Naive thymus-derived CD8-positive, alpha-beta T cell (primary cell): ENCODE measurements at regions of chr12 and their contacts with region 1.

Region 1: DNA sequence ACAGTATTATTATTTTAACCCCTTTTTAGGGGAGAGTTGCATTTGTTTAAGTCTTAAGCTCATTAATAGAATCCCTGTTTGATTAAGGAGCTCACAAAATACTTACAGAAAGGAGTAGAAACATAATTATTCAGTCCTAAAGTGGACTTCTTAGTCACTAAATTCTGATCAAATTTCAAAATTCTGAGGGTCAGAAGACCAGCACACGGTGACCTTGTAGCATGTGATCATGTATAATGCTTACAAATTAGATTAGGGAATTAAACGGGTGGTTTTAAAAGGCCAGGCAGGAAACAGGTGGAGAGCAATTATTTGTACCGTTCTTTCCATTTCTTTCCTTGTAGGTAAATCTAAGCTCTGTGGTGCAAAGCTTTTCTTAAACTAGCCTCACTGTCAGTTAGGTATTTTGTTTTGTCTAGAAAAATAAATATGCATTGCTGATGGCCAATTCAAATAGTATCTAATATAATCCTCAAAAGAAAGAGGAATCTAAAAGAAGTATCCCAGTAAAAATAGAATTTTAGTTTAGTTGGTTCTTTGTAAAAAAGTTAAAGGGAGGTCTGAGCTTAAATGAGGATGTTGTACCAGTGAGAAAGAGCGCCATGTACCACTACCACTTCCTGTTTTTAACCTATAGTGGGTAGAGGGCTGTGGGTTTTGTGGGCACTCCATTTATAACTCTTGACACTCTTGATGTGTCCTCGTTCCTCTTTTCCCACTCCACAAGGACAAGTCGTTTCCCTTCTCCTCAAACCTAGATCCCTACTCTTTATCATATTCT is 51.1 kb downstream of the SLC38A1 start:
- DNase-seq: peak; percentile 17 to 92 (median 70)
- ATAC-seq: peak; percentile 39 to 44
- H3K4me3 Mint-ChIP-seq: peak overlapping the region; percentile 69 to 87 (median 82)
- H3K27ac Mint-ChIP-seq: peak overlapping the region; percentile 96 to 100 (median 98)
- H3K4me1 Mint-ChIP-seq: peaks cover 55 to 100% (median 93%) of the 10 kb centered on the region in 4 donors
- H3K27me3 Mint-ChIP-seq: no peaks in the 10 kb centered on the region

Region 2: GRCh38 chr12:46167412-46167811 is 50.3 kb before region 1 on chr12:
- POLR2A ChIA-PET with region 1: no interaction called
- DNase-seq: no peak
- ATAC-seq: peak; percentile 44 to 54
- H3K4me3 Mint-ChIP-seq: no peak overlapping the region
- H3K27ac Mint-ChIP-seq: no peak overlapping the region
- H3K4me1 Mint-ChIP-seq: peaks cover 4 to 6% (median 5%) of the 10 kb centered on the region in 4 donors
- H3K27me3 Mint-ChIP-seq: no peaks in the 10 kb centered on the region

Region 3: DNA sequence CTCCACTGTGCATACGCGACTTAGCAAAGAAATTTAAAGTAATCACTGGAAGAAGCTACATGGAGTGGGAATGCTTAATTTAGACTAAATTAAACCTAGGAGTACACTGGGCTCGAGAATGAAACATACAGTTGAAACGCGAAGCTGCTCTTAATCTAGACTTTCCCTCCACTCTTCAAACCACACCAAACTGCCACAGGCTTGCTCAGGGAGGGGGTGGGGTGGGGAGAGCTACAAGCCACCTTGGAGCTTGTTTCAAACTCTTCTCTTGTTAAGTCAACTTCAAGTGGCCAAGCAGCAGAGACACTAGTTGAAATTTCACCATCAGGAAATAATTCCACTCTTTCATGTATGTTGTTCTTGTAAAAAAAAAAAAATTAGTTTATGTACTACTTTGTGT is 18.8 kb before region 1 on chr12:
- POLR2A ChIA-PET with region 1: interaction called, 19 read pairs
- DNase-seq: no peak
- ATAC-seq: peak; percentile 39 to 51
- H3K4me3 Mint-ChIP-seq: peak overlapping the region in 3 of 10 donors; percentile 15 to 39 (median 28)
- H3K27ac Mint-ChIP-seq: peak overlapping the region; percentile 0 to 86 (median 79)
- H3K4me1 Mint-ChIP-seq: peaks cover 11 to 39% (median 25%) of the 10 kb centered on the region in 4 donors
- H3K27me3 Mint-ChIP-seq: no peaks in the 10 kb centered on the region

Region 4: DNA sequence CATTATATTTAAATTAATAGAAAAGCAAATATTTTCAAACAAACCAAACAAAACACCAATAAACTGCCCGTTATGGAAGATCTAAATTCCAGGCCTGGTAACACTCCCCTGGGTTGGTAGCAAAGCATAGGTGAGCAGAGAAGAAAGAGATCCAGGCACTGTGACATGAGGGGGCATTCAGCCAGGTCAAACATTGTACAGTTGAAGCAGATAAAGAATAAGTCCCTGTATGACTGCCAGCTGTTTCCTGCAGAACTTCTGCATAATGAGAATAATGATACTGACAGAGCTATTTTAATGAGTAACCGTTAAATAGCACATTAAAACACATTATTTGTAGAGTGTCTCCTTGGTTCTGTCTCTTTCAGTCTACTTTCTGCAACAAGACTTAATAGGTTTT is 15.7 kb after region 1 on chr12:
- POLR2A ChIA-PET with region 1: interaction called, 16 read pairs
- DNase-seq: no peak
- ATAC-seq: no peak
- H3K4me3 Mint-ChIP-seq: peak overlapping the region in 5 of 10 donors; percentile 25 to 51 (median 36)
- H3K27ac Mint-ChIP-seq: peak overlapping the region in 9 of 10 donors; percentile 44 to 88 (median 79)
- H3K4me1 Mint-ChIP-seq: peaks cover 30 to 89% (median 80%) of the 10 kb centered on the region in 4 donors
- H3K27me3 Mint-ChIP-seq: no peaks in the 10 kb centered on the region

Region 5: DNA sequence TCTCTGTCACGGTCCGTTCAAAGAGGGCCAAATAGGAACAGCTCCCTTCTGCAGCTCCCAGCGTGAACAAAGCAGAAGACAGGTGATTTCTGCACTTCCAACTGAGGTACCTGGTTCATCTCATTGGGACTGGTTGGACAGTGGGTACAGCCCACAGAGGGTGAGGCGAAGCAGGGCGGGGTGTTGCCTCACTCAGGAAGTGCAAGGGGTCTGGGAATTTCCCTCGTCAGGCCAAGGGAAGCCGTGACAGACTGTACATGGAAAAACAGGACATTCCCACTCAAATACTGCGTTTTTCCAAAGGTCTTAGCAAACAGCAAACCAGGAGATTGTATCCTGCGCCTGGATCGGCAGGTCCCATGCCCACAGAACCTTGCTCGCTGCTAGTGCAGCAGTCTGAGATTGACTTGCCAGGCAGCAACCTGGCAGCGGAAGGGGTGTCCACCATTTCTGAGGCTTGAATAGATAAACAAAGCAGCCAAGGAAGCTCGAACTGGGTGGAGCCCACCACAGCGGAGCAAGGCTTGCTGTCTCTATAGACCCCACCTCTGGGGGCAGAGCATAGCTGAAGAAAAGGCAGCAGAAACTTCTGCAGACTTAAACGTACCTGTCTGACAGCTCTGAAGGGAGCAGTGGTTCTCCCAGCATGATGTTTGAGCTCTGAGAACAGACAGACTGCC is 28.4 kb after region 1 on chr12:
- POLR2A ChIA-PET with region 1: interaction called, 15 read pairs
- DNase-seq: peak in 9 of 10 donors; percentile 5 to 82 (median 58)
- ATAC-seq: peak; percentile 86 to 92
- H3K4me3 Mint-ChIP-seq: peak overlapping the region; percentile 31 to 84 (median 78)
- H3K27ac Mint-ChIP-seq: peak overlapping the region; percentile 58 to 95 (median 90)
- H3K4me1 Mint-ChIP-seq: peaks cover 45 to 96% (median 93%) of the 10 kb centered on the region in 4 donors
- H3K27me3 Mint-ChIP-seq: no peaks in the 10 kb centered on the region

Region 6: GRCh38 chr12:46260151-46260918 is 42.6 kb after region 1 on chr12:
- POLR2A ChIA-PET with region 1: interaction called, 14 read pairs
- DNase-seq: no peak
- ATAC-seq: no peak
- H3K4me3 Mint-ChIP-seq: no peak overlapping the region
- H3K27ac Mint-ChIP-seq: no peak overlapping the region
- H3K4me1 Mint-ChIP-seq: peaks cover 28 to 50% (median 33%) of the 10 kb centered on the region in 4 donors
- H3K27me3 Mint-ChIP-seq: no peaks in the 10 kb centered on the region